GM12878 (cell line): ENCODE measurements at regions of chr4 and their contacts with region 1.

Region 1: DNA sequence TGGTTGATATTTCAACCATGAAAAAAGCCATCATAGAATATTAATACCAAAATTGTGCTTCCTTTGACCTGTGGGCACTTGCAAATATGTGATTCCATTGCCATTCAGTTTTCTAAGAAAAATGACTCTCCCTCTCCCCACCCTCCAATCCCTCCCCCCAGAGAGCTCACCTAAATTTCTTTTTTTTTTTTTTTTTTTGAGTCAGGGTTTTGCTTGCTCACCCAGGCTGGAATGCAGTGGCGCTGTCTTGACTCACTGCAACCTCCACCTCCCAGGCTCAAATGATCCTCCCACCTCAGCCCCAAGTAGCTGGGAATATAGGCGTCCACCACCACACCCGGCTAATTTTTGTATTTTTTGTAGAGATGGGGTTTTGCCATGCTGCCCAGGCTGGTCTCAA is 47.0 kb downstream of the SNX25 start:
- DNase-seq: no peak
- ATAC-seq: no peak
- H3K4me3 ChIP-seq: no peak overlapping the region
- H3K27ac ChIP-seq: peak overlapping the region; percentile 38; the same call in 1 of the 2 replicates
- H3K4me1 ChIP-seq: peaks cover 34% of the 10 kb centered on the region
- H3K27me3 ChIP-seq: no peaks in the 10 kb centered on the region
- CTCF ChIP-seq: no peak
- EP300 ChIP-seq: no peak
- POLR2A ChIP-seq: no peak
- RAD21 ChIP-seq: no peak

Region 2: DNA sequence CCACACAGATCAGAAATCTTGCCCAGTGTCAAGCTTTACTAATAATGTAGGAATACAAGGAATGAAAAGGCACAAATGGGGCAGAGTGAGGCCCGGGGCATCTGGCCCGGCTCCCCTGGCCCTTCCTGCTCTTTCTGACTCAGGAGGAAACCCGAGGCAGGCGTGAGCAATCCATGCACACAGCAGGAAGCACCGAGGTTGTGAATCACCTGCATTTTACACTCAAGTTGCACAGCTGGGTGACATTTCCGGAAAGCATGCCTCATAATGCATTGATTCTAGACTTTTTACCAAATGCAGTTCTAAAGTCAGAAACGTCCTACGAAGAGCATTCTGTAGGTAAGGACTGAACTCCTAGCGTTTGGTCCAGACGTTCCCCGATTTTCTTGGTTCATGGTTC is 568.0 kb before region 1 on chr4:
- CTCF ChIA-PET with region 1: no interaction called
- POLR2A ChIA-PET with region 1: no interaction called
- RAD21 ChIA-PET with region 1: no interaction called
- SMC1A ChIA-PET with region 1: no interaction called
- in situ Hi-C with region 1: no loop called
- intact Hi-C with region 1: no loop called
- DNase-seq: no peak
- ATAC-seq: no peak
- H3K4me3 ChIP-seq: no peak overlapping the region
- H3K27ac ChIP-seq: no peak overlapping the region
- H3K4me1 ChIP-seq: no peaks in the 10 kb centered on the region
- H3K27me3 ChIP-seq: no peaks in the 10 kb centered on the region
- CTCF ChIP-seq: no peak
- EP300 ChIP-seq: no peak
- POLR2A ChIP-seq: no peak
- RAD21 ChIP-seq: no peak

Region 3: GRCh38 chr4:185209031-185209851 is 47.2 kb before region 1 on chr4 and contains the start of gene SNX25:
- CTCF ChIA-PET with region 1: interaction called, 6 read pairs
- POLR2A ChIA-PET with region 1: interaction called, 3 read pairs
- RAD21 ChIA-PET with region 1: interaction called, 15 read pairs
- SMC1A ChIA-PET with region 1: interaction called, 9 read pairs
- in situ Hi-C with region 1: no loop called
- intact Hi-C with region 1: loop called (anchors 2 kb)
- DNase-seq: no peak
- ATAC-seq: peak; percentile 80
- H3K4me3 ChIP-seq: peak within 1 kb of the TSS; percentile 100
- H3K27ac ChIP-seq: peak within 1 kb of the TSS; percentile 84
- H3K4me1 ChIP-seq: peaks cover 28% of the 10 kb centered on the region
- H3K27me3 ChIP-seq: no peaks in the 10 kb centered on the region
- CTCF ChIP-seq: peak in 2 of 3 experiments; percentile 9 to 27; a peak in 1 of 6 replicates
- EP300 ChIP-seq: no peak
- POLR2A ChIP-seq: peak; percentile 85
- RAD21 ChIP-seq: peak; percentile 41; the same call in 1 of the 2 replicates
- polyA plus RNA-seq, gene SNX25: 19.6 to 27.8 TPM

Region 4: DNA sequence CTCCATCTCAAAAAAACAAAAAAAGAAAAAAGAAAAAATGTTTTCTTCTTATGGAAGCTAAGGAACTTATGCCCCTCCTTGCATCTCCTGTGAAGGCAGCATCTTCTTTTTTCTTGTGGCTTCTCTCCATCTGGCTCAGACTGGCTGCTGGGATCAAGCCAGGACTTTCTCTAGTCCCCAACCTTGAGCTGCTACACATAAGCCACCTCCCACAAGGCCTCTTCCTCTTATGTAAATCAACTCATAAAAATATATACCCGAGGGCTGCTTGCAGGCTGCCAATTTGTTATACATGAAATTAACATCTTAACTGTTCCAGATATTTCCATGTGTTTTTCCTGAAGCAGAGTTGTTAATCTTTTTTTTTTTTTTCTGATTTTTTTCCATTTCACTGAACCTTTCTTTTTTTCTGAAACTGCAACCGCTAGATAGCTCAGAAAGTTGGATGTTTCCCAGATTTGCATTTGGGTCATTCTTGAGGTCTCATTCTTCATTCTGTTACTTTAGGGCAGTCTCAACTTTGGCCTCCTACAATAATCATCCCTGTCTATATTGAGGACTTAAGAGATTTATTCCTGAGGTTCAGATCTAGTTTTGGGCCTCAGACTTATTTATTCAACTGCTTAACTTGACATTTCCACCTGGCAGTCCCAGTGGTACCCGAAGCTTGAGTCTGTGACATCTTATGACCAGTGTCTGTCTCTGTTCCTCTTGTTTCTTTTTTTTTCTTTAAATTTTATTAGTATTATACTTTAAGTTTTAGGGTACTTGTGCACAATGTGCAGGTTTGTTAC is 36.7 kb before region 1 on chr4:
- CTCF ChIA-PET with region 1: interaction called, 6 read pairs
- POLR2A ChIA-PET with region 1: interaction called, 3 read pairs
- RAD21 ChIA-PET with region 1: interaction called, 7 read pairs
- SMC1A ChIA-PET with region 1: interaction called, 12 read pairs
- in situ Hi-C with region 1: no loop called
- intact Hi-C with region 1: no loop called
- DNase-seq: no peak
- ATAC-seq: peak; percentile 76
- H3K4me3 ChIP-seq: peak overlapping the region; percentile 48
- H3K27ac ChIP-seq: no peak overlapping the region; the same call in 1 of the 2 replicates
- H3K4me1 ChIP-seq: peaks cover 14% of the 10 kb centered on the region
- H3K27me3 ChIP-seq: no peaks in the 10 kb centered on the region
- CTCF ChIP-seq: no peak
- EP300 ChIP-seq: no peak
- POLR2A ChIP-seq: no peak
- RAD21 ChIP-seq: no peak